ENCODE measurements at regions of chr9 and their contacts with region 1.

Region 1: GRCh38 chr9:126514047-126514821 is 99.5 kb upstream of the LMX1B start:
- DNase-seq: peak; percentile 75
- ATAC-seq: peak; percentile 83
- H3K4me3 Mint-ChIP-seq: no peak overlapping the region
- H3K27ac Mint-ChIP-seq: no peak overlapping the region
- H3K4me1 Mint-ChIP-seq: peaks cover 30% of the 10 kb centered on the region
- H3K27me3 Mint-ChIP-seq: peaks cover 66% of the 10 kb centered on the region

Region 2: DNA sequence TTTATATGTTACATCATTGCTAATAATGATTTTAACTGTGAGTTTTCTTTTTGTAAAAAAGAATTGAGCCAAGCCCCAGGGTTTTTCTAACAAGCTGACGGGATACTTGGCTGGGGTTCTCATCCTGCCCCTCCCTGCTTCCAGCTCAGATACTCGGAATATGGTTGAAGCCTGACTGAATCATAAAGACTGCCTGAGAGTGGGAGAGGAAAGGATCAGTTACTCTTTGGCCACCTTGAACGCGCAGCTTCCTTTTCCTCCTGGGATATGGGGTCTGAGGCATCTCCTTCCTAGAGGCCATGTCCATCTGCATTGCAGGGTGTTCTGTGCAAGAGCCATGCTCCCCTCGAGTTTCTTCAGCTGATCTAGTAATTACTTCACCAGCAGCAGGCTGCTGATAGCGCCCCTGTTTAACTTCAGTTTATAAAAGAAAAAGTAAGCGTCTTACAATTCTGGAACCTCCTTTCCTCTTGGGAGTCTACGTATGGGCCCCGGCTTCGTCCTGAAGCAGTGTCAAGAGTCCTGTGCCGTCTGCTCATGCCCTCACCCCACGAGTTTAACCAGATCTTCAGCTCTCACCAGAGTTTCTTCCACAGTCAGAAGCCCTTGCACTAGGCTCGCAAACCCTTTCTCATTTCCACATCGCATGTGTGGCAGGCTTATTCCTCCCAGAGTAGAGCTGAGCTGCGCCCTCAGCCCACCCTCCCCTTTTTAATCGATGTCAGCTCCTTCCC is 57.6 kb before region 1 on chr9:
- CTCF ChIA-PET with region 1: no interaction called
- DNase-seq: no peak
- ATAC-seq: no peak
- H3K4me3 Mint-ChIP-seq: no peak overlapping the region
- H3K27ac Mint-ChIP-seq: peak overlapping the region; percentile 20
- H3K4me1 Mint-ChIP-seq: peaks cover 18% of the 10 kb centered on the region
- H3K27me3 Mint-ChIP-seq: no peaks in the 10 kb centered on the region

Region 3: GRCh38 chr9:126564161-126564560 is 49.9 kb after region 1 on chr9:
- CTCF ChIA-PET with region 1: interaction called, 13 read pairs
- DNase-seq: no peak
- ATAC-seq: no peak
- H3K4me3 Mint-ChIP-seq: no peak overlapping the region
- H3K27ac Mint-ChIP-seq: no peak overlapping the region
- H3K4me1 Mint-ChIP-seq: no peaks in the 10 kb centered on the region
- H3K27me3 Mint-ChIP-seq: peaks cover 52% of the 10 kb centered on the region

Measured in activated CD8-positive, alpha-beta memory T cell treated with anti-CD3 and anti-CD28 coated beads, Interleukin-2, amount 10 ng/mL, durations not matched to agents 7 days and 5 days (primary cell).